Caco-2 (cell line): ENCODE measurements at regions of chr1 and their contacts with region 1.

Region 1: DNA sequence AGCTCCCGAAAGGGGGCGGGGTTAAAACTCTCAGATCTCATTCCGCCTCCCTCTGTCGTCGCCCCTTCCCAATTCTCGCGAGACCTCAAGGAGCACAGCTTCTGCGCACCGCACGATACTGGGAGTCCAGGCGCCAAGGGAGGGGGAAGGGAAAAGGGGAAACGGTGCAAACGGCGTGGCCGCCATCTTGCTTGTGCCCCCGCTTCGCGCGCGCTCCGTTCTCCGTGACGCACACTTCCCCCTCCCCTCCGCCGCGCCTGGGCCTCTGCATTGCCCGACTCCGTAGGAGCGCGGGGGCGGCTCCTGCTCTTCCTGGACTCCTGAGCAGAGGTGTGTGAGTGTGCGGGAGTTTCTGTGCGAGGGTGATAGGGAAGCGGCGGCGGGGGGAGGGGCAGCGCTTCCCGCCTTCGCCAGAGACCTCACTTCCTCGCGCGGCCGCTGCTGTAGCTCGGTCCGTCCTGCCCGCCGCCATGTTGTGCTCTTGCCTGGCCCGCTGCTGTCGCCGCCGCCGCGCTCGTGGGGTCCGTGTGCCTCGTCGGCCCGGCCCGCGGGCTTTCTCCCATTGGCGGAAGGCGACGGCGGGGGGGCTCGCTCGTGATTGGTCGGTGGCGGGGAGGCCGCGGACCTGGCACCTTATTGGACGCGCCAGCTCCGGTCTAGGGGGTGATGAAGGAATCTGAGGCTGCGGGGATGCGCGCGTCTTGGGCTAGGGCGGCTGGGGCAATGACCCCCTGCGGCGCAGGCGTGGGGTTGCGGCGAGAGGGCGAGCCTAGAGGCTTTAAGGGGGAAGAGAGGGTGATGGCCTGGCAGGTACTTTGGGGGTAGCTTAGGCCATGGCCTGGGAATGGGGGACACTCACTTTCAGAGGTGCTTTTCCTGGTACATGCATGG is at the start of gene NFYC:
- DNase-seq: peak; percentile 95 to 97
- H3K4me3 ChIP-seq: peak within 1 kb of the TSS; percentile 88
- H3K4me3 Mint-ChIP-seq: peak within 1 kb of the TSS; percentile 86
- H3K27ac Mint-ChIP-seq: peak within 1 kb of the TSS; percentile 98
- H3K4me1 ChIP-seq: peaks cover 16% of the 10 kb centered on the region
- H3K4me1 Mint-ChIP-seq: peaks cover 5% of the 10 kb centered on the region
- H3K27me3 ChIP-seq: no peaks in the 10 kb centered on the region
- H3K27me3 Mint-ChIP-seq: no peaks in the 10 kb centered on the region
- CTCF ChIP-seq: no peak
- total RNA-seq, gene NFYC: 45.5 and 61.6 TPM in 2 replicates

Region 2: GRCh38 chr1:40531381-40532061 is 160.3 kb before region 1 on chr1 and contains the start of gene ZNF684:
- CTCF ChIA-PET with region 1: no interaction called
- POLR2A ChIA-PET with region 1: interaction called, 11 read pairs
- intact Hi-C with region 1: no loop called
- DNase-seq: peak; percentile 81 to 91
- H3K4me3 ChIP-seq: peak within 1 kb of the TSS; percentile 47
- H3K4me3 Mint-ChIP-seq: peak within 1 kb of the TSS; percentile 88
- H3K27ac Mint-ChIP-seq: peak within 1 kb of the TSS; percentile 89
- H3K4me1 ChIP-seq: 0 out of 2 replicates have a peak, but pooled peaks cover 6% of the 10 kb centered on the region
- H3K4me1 Mint-ChIP-seq: no peaks in the 10 kb centered on the region
- H3K27me3 ChIP-seq: no peaks in the 10 kb centered on the region
- H3K27me3 Mint-ChIP-seq: peaks cover 2% of the 10 kb centered on the region
- CTCF ChIP-seq: no peak
- total RNA-seq, gene ZNF684: 2.6 and 3.2 TPM in 2 replicates

Region 3: DNA sequence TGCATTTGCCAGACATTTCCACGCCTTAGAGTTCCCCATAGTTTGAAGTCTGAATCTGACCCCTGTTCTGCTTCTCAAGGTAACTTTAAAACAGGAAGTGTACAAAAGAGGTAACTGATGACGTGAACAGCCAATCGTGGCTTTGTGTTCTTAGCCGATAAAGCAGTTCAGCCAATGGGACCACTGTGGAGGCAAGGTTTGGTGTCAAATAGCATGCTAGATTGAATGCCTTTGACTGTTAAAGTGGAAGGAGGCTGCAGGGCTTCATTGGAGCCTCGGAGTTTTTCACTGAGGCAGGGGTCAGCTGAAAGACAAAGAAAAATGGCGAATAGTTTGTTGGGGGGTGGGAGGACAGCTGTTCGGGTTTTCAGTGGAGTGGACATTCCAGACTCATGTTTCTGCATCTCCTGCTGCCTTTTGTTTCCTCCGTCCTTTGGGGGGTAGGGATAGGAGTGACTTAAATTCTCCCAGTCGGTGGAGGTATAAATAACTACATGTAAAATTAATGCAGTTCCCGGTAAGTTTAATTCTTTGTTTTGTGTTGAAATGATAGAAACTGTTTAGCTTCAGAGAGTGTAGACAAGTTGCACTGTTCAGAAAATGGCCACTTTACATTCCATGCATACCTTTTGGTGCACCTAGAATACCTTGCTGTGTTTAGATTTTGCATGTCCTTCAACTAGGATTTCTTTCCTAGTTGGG is 17.5 kb after region 1 on chr1:
- CTCF ChIA-PET with region 1: no interaction called
- POLR2A ChIA-PET with region 1: interaction called, 14 read pairs
- intact Hi-C with region 1: loop called (anchors 1 kb)
- DNase-seq: peak; percentile 81 to 88
- H3K4me3 ChIP-seq: peak overlapping the region; percentile 53
- H3K4me3 Mint-ChIP-seq: peak overlapping the region; percentile 90
- H3K27ac Mint-ChIP-seq: peak overlapping the region; percentile 96
- H3K4me1 ChIP-seq: peaks cover 24% of the 10 kb centered on the region
- H3K4me1 Mint-ChIP-seq: no peaks in the 10 kb centered on the region
- H3K27me3 ChIP-seq: no peaks in the 10 kb centered on the region
- H3K27me3 Mint-ChIP-seq: no peaks in the 10 kb centered on the region
- CTCF ChIP-seq: no peak

Region 4: DNA sequence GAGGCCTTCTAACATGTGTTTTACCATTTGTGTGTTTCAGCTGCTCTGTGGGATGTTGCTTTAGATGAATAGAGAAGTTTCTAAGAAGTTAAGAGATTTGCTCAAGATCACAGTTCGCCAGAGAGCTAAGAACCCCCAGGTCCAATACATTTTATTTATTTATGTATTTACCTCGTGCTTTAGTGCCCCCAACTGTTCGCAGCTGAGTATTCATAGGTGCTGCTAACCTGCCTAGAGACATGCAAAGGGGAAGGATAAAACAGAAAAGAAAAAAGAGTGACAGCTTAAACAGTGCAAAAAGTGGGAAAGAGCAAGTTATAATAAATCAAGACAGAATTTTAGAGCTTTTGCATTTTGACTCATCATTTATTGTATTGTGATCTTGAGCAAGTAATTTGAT is 30.9 kb after region 1 on chr1:
- CTCF ChIA-PET with region 1: no interaction called
- POLR2A ChIA-PET with region 1: interaction called, 10 read pairs
- intact Hi-C with region 1: no loop called
- DNase-seq: no peak
- H3K4me3 ChIP-seq: no peak overlapping the region
- H3K4me3 Mint-ChIP-seq: no peak overlapping the region
- H3K27ac Mint-ChIP-seq: no peak overlapping the region
- H3K4me1 ChIP-seq: peaks cover 21% of the 10 kb centered on the region; the same call in 1 of the 2 replicates
- H3K4me1 Mint-ChIP-seq: no peaks in the 10 kb centered on the region
- H3K27me3 ChIP-seq: no peaks in the 10 kb centered on the region
- H3K27me3 Mint-ChIP-seq: no peaks in the 10 kb centered on the region
- CTCF ChIP-seq: no peak

Region 5: GRCh38 chr1:40769815-40770214 is 78.0 kb after region 1 on chr1:
- CTCF ChIA-PET with region 1: no interaction called
- POLR2A ChIA-PET with region 1: no interaction called
- intact Hi-C with region 1: no loop called
- DNase-seq: no peak
- H3K4me3 ChIP-seq: no peak overlapping the region
- H3K4me3 Mint-ChIP-seq: no peak overlapping the region
- H3K27ac Mint-ChIP-seq: no peak overlapping the region
- H3K4me1 ChIP-seq: no peaks in the 10 kb centered on the region
- H3K4me1 Mint-ChIP-seq: no peaks in the 10 kb centered on the region
- H3K27me3 ChIP-seq: no peaks in the 10 kb centered on the region
- H3K27me3 Mint-ChIP-seq: no peaks in the 10 kb centered on the region
- CTCF ChIP-seq: no peak